ENCODE measurements at regions of chr10 and their contacts with region 1.

Region 1: GRCh38 chr10:11757821-11758463 is 15.8 kb downstream of the ECHDC3 start:
- DNase-seq: peak; percentile 89
- CTCF ChIP-seq: peak; percentile 94

Region 2: GRCh38 chr10:11505639-11506038 is 252.3 kb before region 1 on chr10:
- CTCF ChIA-PET with region 1: interaction called, 15 read pairs
- POLR2A ChIA-PET with region 1: no interaction called
- DNase-seq: no peak
- CTCF ChIP-seq: no peak

Region 3: GRCh38 chr10:11515596-11516430 is 242.1 kb before region 1 on chr10:
- CTCF ChIA-PET with region 1: interaction called, 97 read pairs
- POLR2A ChIA-PET with region 1: no interaction called
- DNase-seq: peak; percentile 45
- CTCF ChIP-seq: peak; percentile 80

Region 4: GRCh38 chr10:11684717-11685645 is 73.0 kb before region 1 on chr10:
- CTCF ChIA-PET with region 1: interaction called, 10 read pairs
- POLR2A ChIA-PET with region 1: no interaction called
- DNase-seq: peak; percentile 75
- CTCF ChIP-seq: no peak

Region 5: GRCh38 chr10:11724938-11725776 is 32.8 kb before region 1 on chr10:
- CTCF ChIA-PET with region 1: interaction called, 21 read pairs
- POLR2A ChIA-PET with region 1: no interaction called
- DNase-seq: peak; percentile 83
- CTCF ChIP-seq: peak; percentile 65

Region 6: GRCh38 chr10:11742005-11742778 is 15.8 kb before region 1 on chr10 and contains the start of gene ECHDC3:
- CTCF ChIA-PET with region 1: interaction called, 19 read pairs
- POLR2A ChIA-PET with region 1: no interaction called
- DNase-seq: peak; percentile 92
- CTCF ChIP-seq: no peak

Region 7: DNA sequence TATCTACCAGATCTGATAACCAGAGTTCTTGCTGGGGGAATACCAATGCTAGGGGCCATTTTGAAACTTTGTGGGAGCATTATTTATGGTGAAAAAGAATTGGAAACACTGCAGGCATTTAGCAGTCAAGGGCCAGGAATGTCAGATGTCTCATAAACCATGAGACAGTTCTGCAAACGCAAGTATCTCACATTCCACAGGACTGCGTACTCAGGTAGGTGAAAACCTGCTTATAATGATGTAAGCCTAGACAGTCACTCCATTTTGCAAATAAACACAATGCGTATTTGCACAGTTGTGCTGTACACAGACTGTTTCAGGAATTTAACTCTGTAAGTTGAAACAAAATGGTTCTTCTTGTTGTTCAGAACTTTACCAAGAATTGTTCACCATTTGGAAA is 18.2 kb after region 1 on chr10:
- CTCF ChIA-PET with region 1: interaction called, 13 read pairs
- POLR2A ChIA-PET with region 1: no interaction called
- DNase-seq: no peak
- CTCF ChIP-seq: no peak

Region 8: GRCh38 chr10:11830836-11831519 is 73.0 kb after region 1 on chr10:
- CTCF ChIA-PET with region 1: no interaction called
- POLR2A ChIA-PET with region 1: no interaction called
- DNase-seq: no peak
- CTCF ChIP-seq: no peak